Naive thymus-derived CD4-positive, alpha-beta T cell (primary cell): ENCODE measurements at regions of chr4 and their contacts with region 1.

Region 1: GRCh38 chr4:11418610-11419009 is 10.1 kb downstream of the HS3ST1 start:
- DNase-seq: peak in 3 of 9 donors; percentile 10 to 28 (median 13)
- ATAC-seq: no peak
- H3K4me3 ChIP-seq: no peak overlapping the region
- H3K4me3 Mint-ChIP-seq: no peak overlapping the region
- H3K27ac ChIP-seq: no peak overlapping the region
- H3K27ac Mint-ChIP-seq: no peak overlapping the region
- H3K4me1 ChIP-seq: no peaks in the 10 kb centered on the region
- H3K4me1 Mint-ChIP-seq: peaks cover 0 to under 1% (median 0%) of the 10 kb centered on the region in 7 donors
- H3K27me3 ChIP-seq: no peaks in the 10 kb centered on the region
- H3K27me3 Mint-ChIP-seq: peaks cover 0 to 7% (median 3%) of the 10 kb centered on the region in 5 donors

Region 2: GRCh38 chr4:11623726-11624037 is 205.1 kb after region 1 on chr4:
- CTCF ChIA-PET with region 1: no interaction called
- POLR2A ChIA-PET with region 1: no interaction called
- intact Hi-C with region 1: loop called in 1 of 2 experiments (anchors 1 kb)
- DNase-seq: peak in 2 of 9 donors; percentile 3 to 7
- ATAC-seq: no peak
- H3K4me3 ChIP-seq: no peak overlapping the region
- H3K4me3 Mint-ChIP-seq: no peak overlapping the region
- H3K27ac ChIP-seq: no peak overlapping the region
- H3K27ac Mint-ChIP-seq: no peak overlapping the region
- H3K4me1 ChIP-seq: no peaks in the 10 kb centered on the region
- H3K4me1 Mint-ChIP-seq: no peaks in the 10 kb centered on the region
- H3K27me3 ChIP-seq: no peaks in the 10 kb centered on the region
- H3K27me3 Mint-ChIP-seq: peaks cover 0 to 5% (median 3%) of the 10 kb centered on the region in 5 donors